Vagina (tissue), 2 donors: ENCODE measurements at regions of chr18 and their contacts with region 1.

Region 1: DNA sequence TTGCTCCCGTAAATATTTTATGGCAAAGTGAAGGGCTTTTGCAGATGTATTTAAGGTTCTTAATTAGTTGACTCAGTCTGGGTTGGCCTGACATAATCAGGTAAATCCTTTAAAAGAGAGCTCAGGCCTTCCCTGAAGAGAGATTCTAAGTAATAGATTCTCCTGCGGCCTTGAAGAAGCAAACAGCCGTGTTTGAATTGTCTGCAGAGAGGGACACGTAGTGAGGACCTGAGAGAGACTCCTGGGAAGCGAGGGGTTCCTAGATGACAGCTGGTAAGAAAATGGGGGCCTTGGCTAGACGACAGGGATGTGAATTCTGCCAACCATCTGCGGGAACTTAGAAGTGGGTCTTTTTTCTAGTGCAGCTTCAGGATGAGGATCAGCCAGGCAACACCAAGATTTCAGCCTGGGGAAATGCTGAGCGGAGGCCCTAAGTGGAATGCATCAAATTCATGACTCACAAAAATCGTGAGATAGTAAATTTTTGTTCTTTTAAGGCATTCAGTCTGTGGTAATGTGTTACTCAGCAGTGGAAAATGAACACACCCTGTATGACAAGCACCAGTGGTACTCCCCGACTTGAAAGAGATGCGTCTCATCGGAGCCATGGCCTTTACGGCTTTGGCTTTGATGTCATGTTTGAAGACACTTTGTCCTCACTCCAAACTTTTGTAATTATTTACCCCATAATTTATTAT is 62.1 kb upstream of the SMIM21 start:
- DNase-seq: no peak
- H3K4me3 ChIP-seq: no peak overlapping the region
- H3K27ac ChIP-seq: no peak overlapping the region
- H3K4me1 ChIP-seq: no peaks in the 10 kb centered on the region
- H3K27me3 ChIP-seq: no peaks in the 10 kb centered on the region
- CTCF ChIP-seq: no peak
- POLR2A ChIP-seq: no peak

Region 2: DNA sequence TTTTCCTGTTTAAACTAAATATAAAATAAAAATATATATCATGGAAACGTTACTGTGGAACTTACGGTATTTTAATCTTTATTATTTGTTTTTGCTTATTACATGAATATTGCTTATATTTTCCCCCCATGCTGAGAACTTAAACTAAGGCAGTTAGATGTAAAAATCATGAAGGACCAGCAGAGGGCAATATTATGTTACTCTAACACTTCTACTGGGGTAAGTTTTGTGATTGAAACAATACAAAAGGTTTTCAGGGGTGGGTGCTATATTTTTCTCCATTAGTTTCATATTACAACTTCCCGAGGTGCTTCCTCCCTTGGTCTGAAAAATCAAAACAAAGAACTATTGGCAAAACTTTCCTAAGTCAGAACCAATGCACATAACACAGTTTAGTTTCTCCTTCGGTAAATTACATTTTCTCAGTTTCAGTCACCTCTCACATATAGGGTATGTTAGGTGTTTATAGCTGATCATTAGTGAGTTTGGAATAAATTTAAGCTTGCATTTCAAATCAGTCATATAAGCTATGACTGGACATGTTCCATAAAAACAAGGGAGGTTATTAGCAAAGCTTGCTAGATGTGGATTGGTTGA is 837.2 kb before region 1 on chr18:
- intact Hi-C with region 1: loop called (anchors 10 kb)
- DNase-seq: no peak
- H3K4me3 ChIP-seq: no peak overlapping the region
- H3K27ac ChIP-seq: no peak overlapping the region
- H3K4me1 ChIP-seq: no peaks in the 10 kb centered on the region
- H3K27me3 ChIP-seq: no peaks in the 10 kb centered on the region
- CTCF ChIP-seq: peak in 1 of 3 experiments; percentile 48
- POLR2A ChIP-seq: no peak

Region 3: DNA sequence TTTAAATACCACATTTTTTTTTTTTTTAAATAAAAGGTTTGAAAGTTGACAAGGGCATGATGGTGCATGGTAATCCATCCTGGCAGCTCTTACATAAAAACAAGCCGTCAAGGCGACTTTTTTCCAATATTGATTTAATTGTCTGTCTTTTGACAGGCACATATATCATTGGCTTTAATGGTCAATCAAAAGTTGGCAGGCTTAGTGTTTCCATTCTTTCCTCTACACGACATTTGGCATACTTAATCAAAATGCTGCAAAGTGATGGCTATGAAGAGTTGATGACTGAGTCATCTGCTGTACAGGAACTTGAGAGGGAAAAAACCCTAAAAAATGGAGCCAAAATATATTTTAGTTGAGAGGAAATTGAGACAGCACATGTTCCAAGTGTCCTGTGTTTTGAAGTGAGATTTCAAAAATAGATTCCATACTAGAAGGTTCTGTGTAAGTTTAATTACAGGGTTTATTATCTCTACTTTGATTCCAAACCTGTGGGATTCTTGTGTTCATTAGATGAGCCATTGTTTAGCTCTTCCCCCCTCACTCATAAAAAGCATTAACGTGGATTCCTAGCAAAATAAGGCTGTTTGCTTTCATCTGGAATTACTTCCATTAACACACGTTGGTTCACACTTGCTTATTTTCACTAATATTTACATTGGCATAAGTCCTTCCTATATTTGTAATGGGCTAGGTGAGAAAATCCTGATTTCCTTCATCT is 275.9 kb before region 1 on chr18:
- intact Hi-C with region 1: no loop called
- DNase-seq: peak in 1 of 2 donors; percentile 13
- H3K4me3 ChIP-seq: peak overlapping the region in 1 of 2 donors; percentile 2
- H3K27ac ChIP-seq: peak overlapping the region; percentile 94
- H3K4me1 ChIP-seq: peaks cover 69% of the 10 kb centered on the region
- H3K27me3 ChIP-seq: no peaks in the 10 kb centered on the region
- CTCF ChIP-seq: no peak
- POLR2A ChIP-seq: no peak